Esophagus muscularis mucosa (tissue), 4 donors: ENCODE measurements at regions of chrX and their contacts with region 1.

Region 1: GRCh38 chrX:154486396-154487207 is at the start of gene UBL4A:
- DNase-seq: no peak
- H3K4me3 ChIP-seq: peak within 1 kb of the TSS; percentile 68 to 81 (median 70)
- H3K27ac ChIP-seq: peak within 1 kb of the TSS; percentile 86 to 89 (median 88)
- H3K4me1 ChIP-seq: peaks cover 23 to 50% (median 48%) of the 10 kb centered on the region in 4 donors
- H3K27me3 ChIP-seq: no peaks in the 10 kb centered on the region
- CTCF ChIP-seq: no peak
- EP300 ChIP-seq: no peak
- POLR2A ChIP-seq: no peak
- total RNA-seq, gene UBL4A: 41.7 to 75.8 (median 57.9) TPM

Region 2: DNA sequence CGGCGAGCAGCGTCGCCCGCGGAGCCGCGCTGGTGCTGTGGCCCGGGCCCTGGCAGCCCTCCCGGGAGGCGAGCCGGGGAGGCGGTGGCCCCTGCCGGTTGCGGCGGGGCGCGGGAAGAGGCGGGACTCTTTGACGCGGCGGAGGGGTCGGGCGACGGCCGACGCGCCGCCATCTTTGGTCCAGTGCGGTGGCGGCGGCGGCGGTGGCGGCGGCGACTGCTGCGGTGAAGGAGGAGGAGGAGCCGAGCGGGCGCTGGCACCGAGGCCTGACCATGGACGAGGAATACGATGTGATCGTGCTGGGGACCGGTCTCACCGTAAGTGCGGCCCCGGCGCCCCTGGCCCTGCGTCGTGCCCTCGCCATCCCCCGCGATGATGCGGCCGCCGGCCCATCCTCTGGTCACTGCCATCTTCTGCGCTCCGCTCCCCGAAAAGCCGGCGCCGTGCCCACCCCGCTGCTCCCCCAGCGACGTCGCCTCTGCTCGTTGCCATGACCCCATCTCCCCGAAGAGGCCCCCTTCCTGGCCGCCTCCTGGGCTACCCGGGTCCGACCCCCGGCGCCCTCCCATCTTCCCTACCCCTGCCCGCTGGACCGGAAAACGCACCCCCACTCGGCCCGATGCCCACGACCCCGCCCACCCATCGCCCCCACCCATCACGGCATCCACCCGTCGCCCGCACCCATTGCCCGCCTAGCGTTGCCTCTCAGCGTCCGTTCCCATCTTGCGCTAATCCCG is 49.5 kb before region 1 on chrX and contains the start of gene GDI1:
- intact Hi-C with region 1: loop called (anchors 5 kb)
- DNase-seq: no peak
- H3K4me3 ChIP-seq: peak within 1 kb of the TSS; percentile 68 to 84 (median 74)
- H3K27ac ChIP-seq: peak within 1 kb of the TSS; percentile 88 to 91 (median 90)
- H3K4me1 ChIP-seq: peaks cover 7 to 24% (median 22%) of the 10 kb centered on the region in 4 donors
- H3K27me3 ChIP-seq: no peaks in the 10 kb centered on the region
- CTCF ChIP-seq: no peak
- EP300 ChIP-seq: no peak
- POLR2A ChIP-seq: peak; percentile 22
- total RNA-seq, gene GDI1: 105 to 148 (median 128) TPM

Region 3: DNA sequence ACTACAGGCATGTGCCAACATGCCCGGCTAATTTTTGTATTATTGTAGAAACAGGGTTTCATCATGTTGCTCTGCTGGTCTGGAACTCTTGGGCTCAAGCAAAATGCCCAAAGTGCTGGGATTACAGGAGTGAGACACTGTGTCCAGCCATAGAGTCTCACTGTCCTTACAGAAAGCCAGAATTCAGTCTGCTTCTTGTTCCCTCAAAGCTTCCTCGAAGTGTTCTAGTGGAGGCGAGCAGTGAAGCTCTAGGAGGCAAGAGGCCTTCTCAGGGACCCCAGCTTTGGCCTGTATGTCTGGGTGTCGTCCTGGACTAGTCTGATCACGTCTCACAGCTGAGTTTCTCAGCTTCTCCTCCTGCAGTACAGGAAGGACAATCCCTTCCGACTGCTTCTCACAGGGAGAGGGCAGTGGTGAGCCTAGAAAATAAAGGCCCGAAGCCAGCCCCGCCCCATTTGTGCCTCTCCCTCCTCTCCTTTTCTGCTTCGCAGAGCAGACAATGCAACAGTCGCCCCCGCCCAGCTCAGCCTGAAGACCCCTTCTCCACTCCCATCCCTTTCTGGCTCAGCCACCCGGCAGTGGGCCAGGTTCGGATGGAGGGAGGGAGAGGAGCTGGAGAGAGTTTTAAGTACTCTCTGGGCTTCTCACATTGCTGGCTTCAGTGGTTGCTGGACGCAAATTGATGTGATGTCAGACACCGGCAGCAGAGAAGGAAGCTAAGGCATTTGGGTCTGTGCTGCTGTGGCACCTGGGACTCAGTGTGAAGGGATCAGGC is 40.5 kb after region 1 on chrX:
- intact Hi-C with region 1: loop called (anchors 5 kb)
- DNase-seq: no peak
- H3K4me3 ChIP-seq: peak overlapping the region; percentile 38 to 43 (median 42)
- H3K27ac ChIP-seq: peak overlapping the region; percentile 67 to 78 (median 74)
- H3K4me1 ChIP-seq: peaks cover 3 to 14% (median 12%) of the 10 kb centered on the region in 4 donors
- H3K27me3 ChIP-seq: no peaks in the 10 kb centered on the region
- CTCF ChIP-seq: peak; percentile 45 to 60 (median 57)
- EP300 ChIP-seq: no peak
- POLR2A ChIP-seq: no peak